Activated T-helper 1 cell treated with anti-CD3 and anti-CD28 coated beads, Interleukin-12 subunit alpha, Interleukin-12 subunit beta, Interleukin-2, Interleukin-4 antibody, amounts not matched to agents 30 ng/mL and 10 ng/mL and 1 ng/mL, durations not matched to agents 14 hours and 24 hours and 36 hours (primary cell): ENCODE measurements at regions of chr9 and their contacts with region 1.

Region 1: DNA sequence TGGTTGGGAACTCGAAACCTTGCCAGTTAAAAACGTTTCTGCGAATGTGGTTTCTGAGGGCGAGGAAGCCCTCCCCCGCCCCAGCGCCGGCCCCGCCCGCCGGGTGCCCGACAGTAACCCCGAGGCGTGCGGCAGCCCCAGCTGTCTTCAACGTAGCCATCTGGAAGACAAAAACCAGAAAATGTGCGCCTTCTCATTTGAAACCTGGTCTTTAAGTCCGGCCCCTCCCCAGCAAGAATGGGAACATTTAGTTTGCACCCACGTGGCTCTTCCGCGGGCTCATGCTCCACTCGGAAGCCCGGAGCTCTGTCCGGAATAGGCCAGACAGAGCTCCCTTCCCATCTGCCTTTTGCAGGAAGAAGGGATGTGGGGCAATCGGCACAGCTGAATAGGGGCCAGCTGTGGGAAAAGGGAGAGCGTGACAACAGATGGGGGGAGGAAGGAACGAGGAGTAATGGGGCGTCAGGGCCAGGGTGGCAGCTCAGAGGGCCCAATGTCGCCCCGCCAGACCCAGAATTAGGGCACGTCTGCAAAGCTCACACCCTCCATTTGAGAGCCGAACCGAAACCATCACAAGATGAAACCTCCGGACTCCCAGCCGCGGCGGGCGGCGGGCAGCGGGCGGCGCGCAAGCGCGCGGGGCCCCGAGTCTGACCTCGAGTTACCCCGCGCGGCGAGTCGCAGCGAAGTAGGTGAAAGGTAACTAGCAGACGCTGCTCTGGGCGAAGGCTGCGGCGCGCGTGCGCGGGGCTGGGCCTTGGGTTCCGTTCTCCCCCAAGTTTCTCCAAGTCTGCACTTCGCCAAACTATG is 63.4 kb upstream of the ABCA1 start:
- DNase-seq: peak; percentile 79
- H3K4me3 Mint-ChIP-seq: peak overlapping the region; percentile 84
- H3K27ac Mint-ChIP-seq: peak overlapping the region; percentile 74
- H3K4me1 Mint-ChIP-seq: peaks cover 44% of the 10 kb centered on the region
- H3K27me3 Mint-ChIP-seq: peaks cover 29% of the 10 kb centered on the region

Region 2: GRCh38 chr9:104934691-104935500 is 56.5 kb before region 1 on chr9:
- intact Hi-C with region 1: no loop called
- DNase-seq: no peak
- H3K4me3 Mint-ChIP-seq: no peak overlapping the region
- H3K27ac Mint-ChIP-seq: no peak overlapping the region
- H3K4me1 Mint-ChIP-seq: no peaks in the 10 kb centered on the region
- H3K27me3 Mint-ChIP-seq: peaks cover 2% of the 10 kb centered on the region

Region 3: DNA sequence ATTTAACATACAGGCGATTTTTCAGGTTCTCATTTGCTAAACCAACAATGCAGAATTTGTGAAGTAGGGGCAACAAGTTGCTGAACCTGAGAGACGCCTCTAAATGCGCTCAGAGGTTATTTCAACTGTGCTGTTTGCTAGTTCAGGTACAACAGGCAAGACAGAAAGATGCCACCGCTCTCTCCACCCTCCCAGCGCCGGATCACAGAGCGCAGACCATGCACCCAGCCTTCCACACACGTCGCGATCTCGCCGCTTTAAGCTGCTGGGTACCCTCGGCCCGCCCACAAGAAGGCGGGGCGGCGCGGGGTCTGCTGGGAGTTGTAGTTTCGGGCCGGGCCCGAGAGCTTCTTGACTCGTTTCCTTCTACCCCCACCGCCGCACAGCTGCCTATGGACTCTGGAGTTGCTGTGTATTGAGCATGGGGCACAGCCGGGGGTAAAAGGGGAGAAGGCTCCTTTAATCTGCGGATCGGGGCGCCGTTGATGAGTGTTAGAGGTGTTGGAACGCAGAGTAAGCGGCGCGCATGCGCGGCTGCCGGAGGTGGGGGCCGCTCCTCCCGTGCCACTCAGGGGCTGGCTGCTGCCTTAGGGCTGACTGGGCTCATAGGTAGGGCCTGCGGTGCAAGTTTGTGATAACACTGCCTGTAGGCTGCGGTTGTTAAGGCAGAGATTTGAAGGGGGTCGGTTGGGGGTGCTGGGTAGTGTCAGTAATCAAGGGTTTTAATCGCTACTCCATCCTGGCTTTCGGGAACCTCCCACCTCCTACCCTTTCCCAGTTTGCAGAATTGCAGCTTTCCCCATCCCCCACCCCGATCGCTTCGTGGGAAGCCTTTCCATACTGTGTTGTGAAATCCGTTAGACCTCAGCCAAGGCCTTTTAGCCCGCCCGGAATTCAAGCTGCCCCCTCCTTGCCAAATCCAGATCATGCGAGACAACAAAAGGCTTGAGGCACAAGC is 23.0 kb before region 1 on chr9:
- intact Hi-C with region 1: loop called (anchors 1 kb)
- DNase-seq: peak; percentile 84
- H3K4me3 Mint-ChIP-seq: peak overlapping the region; percentile 92
- H3K27ac Mint-ChIP-seq: peak overlapping the region; percentile 66
- H3K4me1 Mint-ChIP-seq: peaks cover 13% of the 10 kb centered on the region
- H3K27me3 Mint-ChIP-seq: peaks cover 21% of the 10 kb centered on the region

Region 4: DNA sequence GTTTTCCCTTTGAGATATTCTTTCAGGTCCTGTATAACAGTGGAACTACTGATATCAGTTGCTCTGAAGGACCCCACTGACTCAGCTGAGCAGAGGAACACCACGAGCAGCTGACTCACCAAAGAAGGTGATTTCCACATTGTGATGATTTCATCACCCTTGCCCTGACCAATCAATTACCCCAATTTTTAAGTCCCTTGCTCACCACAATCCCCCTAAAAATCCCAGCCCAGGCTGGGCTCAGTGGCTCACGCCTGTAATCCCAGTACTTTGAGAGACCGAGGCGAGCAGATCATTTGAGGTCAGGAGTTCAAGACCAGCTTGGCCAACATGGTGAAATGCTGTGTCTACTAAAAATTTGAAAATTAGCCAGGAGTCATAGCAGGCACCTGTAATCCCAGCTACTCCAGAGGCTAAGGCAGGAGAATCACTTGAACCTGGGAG is 61.9 kb after region 1 on chr9:
- intact Hi-C with region 1: loop called (anchors 1 kb)
- DNase-seq: peak; percentile 6
- H3K4me3 Mint-ChIP-seq: peak overlapping the region; percentile 9
- H3K27ac Mint-ChIP-seq: peak overlapping the region; percentile 49
- H3K4me1 Mint-ChIP-seq: peaks cover 26% of the 10 kb centered on the region
- H3K27me3 Mint-ChIP-seq: peaks cover 3% of the 10 kb centered on the region

Region 5: DNA sequence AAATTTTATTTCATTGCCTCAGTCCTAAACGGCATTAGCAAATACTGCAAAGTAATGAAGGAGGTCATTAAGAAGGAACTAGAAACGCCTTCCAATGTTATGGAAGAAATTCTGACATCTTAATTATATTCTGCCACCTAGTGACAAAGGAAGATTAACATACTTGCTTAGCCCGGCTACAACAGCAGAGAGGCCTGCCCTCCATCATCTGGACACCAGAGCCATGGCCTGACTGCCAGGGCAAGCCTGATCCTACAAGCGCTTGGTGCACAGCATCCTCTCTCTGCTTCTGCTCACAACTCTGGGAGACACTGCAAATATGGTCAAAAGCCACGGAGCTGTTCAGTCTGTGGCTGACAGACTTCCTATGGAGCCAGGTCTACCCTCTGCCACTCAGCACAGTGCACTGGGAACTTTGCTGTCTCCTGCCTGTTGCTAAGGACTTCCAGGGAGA is 165.8 kb after region 1 on chr9:
- intact Hi-C with region 1: loop called (anchors 10 kb)
- DNase-seq: no peak
- H3K4me3 Mint-ChIP-seq: no peak overlapping the region
- H3K27ac Mint-ChIP-seq: no peak overlapping the region
- H3K4me1 Mint-ChIP-seq: peaks cover 6% of the 10 kb centered on the region
- H3K27me3 Mint-ChIP-seq: no peaks in the 10 kb centered on the region

Region 6: DNA sequence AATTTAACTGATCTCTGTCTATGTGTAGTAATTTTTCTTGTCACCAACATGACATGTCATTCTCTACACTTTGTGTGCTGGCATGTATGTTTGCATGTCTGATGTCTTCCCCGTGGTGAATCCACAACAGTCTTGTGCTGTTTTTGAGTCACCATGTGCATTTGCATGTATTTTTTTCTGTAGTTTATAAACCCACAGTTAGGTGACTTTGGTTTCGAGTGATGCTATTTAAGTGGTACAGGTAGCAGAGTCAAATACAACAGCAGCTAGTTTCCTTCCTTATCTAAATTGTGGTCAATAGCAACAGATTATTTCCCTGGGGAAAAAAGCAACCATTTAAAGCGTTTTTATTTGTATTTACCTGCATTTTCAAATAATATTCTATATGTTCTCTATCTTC is 366.6 kb after region 1 on chr9:
- intact Hi-C with region 1: loop called (anchors 2 kb)
- DNase-seq: no peak
- H3K4me3 Mint-ChIP-seq: no peak overlapping the region
- H3K27ac Mint-ChIP-seq: no peak overlapping the region
- H3K4me1 Mint-ChIP-seq: peaks cover 18% of the 10 kb centered on the region
- H3K27me3 Mint-ChIP-seq: no peaks in the 10 kb centered on the region

Region 7: GRCh38 chr9:105414947-105415661 is 423.8 kb after region 1 on chr9:
- intact Hi-C with region 1: loop called (anchors 2 kb)
- DNase-seq: peak; percentile 25
- H3K4me3 Mint-ChIP-seq: no peak overlapping the region
- H3K27ac Mint-ChIP-seq: no peak overlapping the region
- H3K4me1 Mint-ChIP-seq: peaks cover 13% of the 10 kb centered on the region
- H3K27me3 Mint-ChIP-seq: peaks cover 46% of the 10 kb centered on the region